ENCODE measurements at regions of chr10 and their contacts with region 1.

Region 1: DNA sequence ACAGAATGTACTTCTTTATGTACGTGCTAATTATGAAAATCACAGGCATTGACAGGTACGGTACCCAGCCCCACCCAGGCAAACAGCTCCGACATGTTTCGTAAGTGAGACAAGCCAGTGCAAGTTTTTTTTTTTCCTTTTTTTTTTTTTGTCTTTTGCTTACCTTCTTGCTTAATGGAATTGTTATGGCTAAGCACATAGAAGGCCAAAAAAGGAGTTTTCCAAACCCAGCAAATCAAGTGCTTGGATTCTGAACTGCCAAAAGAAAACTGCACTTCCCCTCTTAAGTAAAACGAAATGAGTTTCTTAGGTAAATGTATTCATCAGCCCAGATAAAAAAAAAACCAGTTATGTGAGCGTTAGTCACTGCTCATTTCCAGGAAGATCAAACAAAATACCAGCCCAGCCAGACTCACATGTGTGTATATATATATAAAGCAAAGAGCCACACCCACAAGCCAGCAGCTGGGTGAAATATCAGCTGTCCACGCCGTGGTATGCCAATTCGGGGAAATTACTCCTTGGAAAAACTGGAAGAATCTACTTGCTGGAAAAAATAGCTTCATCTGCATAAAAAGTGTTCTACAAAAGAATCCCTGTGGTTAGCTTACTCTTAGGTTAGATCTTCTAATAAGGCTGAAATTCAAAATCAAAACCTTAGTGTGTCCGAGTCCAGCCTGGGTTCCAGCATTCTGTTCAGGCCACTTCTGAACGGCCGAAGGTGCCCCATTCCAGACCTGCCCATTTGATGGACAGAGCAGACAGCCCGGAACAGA is 8.0 kb downstream of the KLF6 start:
- DNase-seq: peak; percentile 71
- ATAC-seq: peak; percentile 68
- H3K4me3 Mint-ChIP-seq: peak overlapping the region; percentile 62
- H3K27ac Mint-ChIP-seq: peak overlapping the region; percentile 90
- H3K4me1 Mint-ChIP-seq: peaks cover 67% of the 10 kb centered on the region
- H3K27me3 Mint-ChIP-seq: no peaks in the 10 kb centered on the region

Region 2: GRCh38 chr10:3197348-3198003 is 579.5 kb before region 1 on chr10:
- CTCF ChIA-PET with region 1: interaction called, 4 read pairs
- POLR2A ChIA-PET with region 1: no interaction called
- intact Hi-C with region 1: loop called (anchors 5 kb)
- DNase-seq: peak; percentile 92
- ATAC-seq: peak; percentile 90
- H3K4me3 Mint-ChIP-seq: no peak overlapping the region
- H3K27ac Mint-ChIP-seq: no peak overlapping the region
- H3K4me1 Mint-ChIP-seq: peaks cover 11% of the 10 kb centered on the region
- H3K27me3 Mint-ChIP-seq: peaks cover 60% of the 10 kb centered on the region

Region 3: DNA sequence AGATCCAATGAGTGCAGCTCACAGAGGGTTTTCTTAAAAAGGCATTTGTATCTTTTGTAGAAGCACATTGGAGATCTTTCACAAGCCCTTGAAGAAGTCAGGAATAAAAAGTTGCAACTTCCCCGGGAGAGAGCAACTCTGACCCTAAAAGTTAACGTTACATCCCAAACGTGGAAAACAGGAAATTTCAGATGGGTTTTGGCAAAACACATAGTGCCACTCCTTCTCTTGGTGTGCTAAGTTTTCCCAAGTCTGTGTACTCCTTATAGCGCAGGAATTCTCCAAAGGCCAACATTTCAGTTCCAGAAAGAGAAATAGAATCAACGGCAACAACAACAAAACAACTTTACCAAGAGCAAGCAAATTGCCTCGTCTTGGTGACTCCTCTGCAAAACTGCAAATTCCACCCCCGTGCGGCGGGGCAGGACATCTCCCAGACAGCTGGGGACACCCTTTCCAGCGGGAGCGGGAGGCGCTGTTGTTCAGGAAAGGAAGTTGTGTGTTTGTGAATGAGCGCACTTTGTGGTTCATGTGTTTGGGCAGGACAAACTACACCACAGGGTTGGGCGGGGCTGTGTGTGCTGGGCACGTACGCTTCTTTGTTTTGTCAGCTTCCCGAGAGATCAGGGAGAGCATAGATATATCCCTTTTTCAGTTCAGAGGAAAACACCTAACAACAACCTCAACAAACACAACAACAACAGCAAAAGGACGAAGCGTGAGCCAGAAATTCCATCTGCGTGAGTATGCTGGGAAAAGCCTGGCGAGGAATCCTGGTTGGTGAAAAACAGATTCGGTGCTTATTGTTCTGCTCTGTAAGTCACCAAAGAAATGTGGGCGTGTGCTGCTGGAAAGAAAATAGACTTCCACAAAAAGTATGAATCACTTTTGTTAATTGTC is 309.7 kb before region 1 on chr10:
- CTCF ChIA-PET with region 1: no interaction called
- POLR2A ChIA-PET with region 1: no interaction called
- intact Hi-C with region 1: loop called in 1 of 2 experiments (anchors 5 kb)
- DNase-seq: peak; percentile 22
- ATAC-seq: no peak
- H3K4me3 Mint-ChIP-seq: peak overlapping the region; percentile 64
- H3K27ac Mint-ChIP-seq: peak overlapping the region; percentile 89
- H3K4me1 Mint-ChIP-seq: peaks cover 42% of the 10 kb centered on the region
- H3K27me3 Mint-ChIP-seq: peaks cover 1% of the 10 kb centered on the region

Region 4: DNA sequence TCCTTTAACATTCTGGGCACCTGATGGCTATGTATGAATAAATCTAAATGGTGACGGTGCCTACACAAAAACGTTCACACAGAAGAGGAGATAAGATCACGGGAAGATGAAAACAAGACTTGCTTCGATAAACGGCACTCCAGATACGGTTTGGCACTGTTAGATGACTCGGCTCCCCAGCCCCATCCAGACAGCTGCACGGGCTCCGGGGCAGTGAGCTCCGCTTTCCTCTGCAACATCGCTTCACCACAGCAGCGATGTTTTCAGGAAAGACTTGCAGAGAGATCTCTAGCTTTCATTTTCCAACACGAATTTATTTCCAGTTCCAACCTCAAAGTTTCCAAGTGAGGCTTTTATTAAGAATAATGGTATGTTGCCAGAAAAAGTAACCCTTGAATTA is 124.1 kb before region 1 on chr10:
- CTCF ChIA-PET with region 1: no interaction called
- POLR2A ChIA-PET with region 1: no interaction called
- intact Hi-C with region 1: no loop called
- DNase-seq: peak; percentile 61
- ATAC-seq: peak; percentile 90
- H3K4me3 Mint-ChIP-seq: peak overlapping the region; percentile 50
- H3K27ac Mint-ChIP-seq: peak overlapping the region; percentile 61
- H3K4me1 Mint-ChIP-seq: peaks cover 24% of the 10 kb centered on the region
- H3K27me3 Mint-ChIP-seq: peaks cover 14% of the 10 kb centered on the region

Region 5: DNA sequence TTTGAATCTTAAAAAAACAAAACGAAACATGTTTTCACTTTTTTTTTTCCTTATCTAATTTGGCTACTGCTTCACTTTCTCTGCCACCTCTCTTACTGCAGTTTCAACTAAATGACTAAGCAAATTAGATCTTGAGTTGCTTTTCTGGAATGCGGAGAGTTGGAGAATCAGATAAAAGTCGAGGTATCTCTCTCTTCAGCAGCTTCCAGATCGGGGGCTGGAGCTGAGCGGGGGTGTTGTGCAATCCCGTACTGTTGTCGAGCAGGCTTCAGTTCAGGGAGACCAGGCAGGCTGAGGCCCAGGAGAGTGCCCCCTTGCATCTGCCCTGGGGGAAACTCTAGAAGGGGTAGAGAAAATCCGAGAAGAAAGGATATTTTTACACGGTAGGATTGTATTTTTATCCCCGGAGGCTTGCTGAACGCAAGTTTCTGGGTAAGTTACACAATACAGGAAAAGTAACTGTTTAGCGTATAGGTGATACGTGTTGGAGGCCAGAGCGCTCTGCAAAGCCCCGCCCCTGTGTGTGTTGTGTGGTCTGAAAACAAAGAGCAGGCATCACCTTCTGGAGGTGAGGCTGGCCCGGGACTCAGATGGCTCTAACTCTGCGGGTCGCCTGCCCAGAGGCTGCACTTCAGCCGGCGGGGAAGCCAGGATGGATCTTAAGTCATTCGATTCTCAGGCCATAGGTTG is 108.6 kb before region 1 on chr10:
- CTCF ChIA-PET with region 1: no interaction called
- POLR2A ChIA-PET with region 1: no interaction called
- intact Hi-C with region 1: loop called (anchors 5 kb)
- DNase-seq: peak; percentile 79
- ATAC-seq: peak; percentile 90
- H3K4me3 Mint-ChIP-seq: peak overlapping the region; percentile 67
- H3K27ac Mint-ChIP-seq: peak overlapping the region; percentile 81
- H3K4me1 Mint-ChIP-seq: peaks cover 41% of the 10 kb centered on the region
- H3K27me3 Mint-ChIP-seq: no peaks in the 10 kb centered on the region

Region 6: DNA sequence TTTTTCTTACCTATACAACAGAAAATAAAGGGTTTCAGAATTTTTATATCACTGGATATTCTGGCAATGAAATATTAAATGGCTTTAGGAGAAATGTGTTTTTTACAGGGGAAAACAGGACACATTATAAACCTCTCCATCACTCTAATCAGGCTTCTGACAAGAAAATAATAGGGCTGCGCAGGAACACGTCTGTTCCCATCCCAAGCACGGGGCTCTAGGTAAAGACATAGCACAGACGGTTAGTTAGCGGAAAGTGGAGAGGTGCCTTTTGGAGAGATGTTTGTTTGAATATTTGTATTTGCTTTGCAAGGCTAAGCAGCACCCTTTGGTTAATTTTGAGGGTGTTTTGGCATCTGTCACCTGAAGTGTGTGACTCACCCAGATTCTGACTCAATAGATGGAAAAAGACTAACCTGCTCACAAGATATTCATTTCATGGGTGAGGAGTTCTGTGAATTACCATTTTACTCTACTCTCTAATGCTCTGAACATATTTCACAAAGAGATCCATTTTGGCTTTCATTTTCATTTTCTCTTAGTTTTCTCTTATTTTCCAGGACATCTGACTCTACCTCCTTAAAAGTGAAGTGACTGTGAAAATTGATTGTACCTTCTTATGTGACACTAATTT is 874.5 kb after region 1 on chr10:
- CTCF ChIA-PET with region 1: no interaction called
- POLR2A ChIA-PET with region 1: no interaction called
- intact Hi-C with region 1: loop called (anchors 2 to 5 kb)
- DNase-seq: peak; percentile 30
- ATAC-seq: peak; percentile 85
- H3K4me3 Mint-ChIP-seq: peak overlapping the region; percentile 36
- H3K27ac Mint-ChIP-seq: peak overlapping the region; percentile 90
- H3K4me1 Mint-ChIP-seq: peaks cover 37% of the 10 kb centered on the region
- H3K27me3 Mint-ChIP-seq: peaks cover 6% of the 10 kb centered on the region